ENCODE measurements at regions of chr5 and their contacts with region 1.

Region 1: DNA sequence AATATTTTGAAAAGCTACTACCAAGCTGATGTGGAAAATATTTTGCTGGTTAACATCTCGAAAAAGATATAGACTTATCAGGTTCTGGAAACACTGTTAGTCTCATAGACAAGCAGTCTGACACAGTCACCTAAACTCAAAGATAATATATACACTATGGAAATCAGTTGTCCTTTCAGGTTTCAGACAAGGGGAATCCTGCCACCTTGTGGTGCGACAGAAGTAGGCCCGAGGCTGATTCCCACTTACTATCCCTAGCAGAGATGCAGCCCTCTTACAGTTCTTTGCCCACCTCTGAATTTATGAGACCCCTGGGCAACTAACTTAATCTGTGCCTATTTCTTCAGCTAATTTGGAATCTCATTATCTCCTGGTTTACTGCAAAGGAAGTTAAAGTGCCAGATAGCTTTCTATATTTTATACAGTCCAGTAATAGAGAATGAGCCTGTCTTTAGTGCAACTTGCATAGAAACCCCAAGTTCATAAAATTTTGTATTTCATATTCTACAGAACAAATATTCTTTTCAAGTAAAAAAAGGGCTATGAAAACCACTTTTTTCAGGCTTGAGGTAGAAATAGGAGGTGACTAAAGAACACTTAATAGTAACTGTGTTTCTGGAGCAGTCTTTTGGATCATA is 16.9 kb downstream of the RAD1 start:
- DNase-seq: peak; percentile 65 to 82 (median 78)
- H3K4me3 ChIP-seq: no peak overlapping the region
- H3K27ac ChIP-seq: no peak overlapping the region
- H3K4me1 ChIP-seq: peaks cover 0 to 3% (median 0%) of the 10 kb centered on the region in 4 experiments
- H3K27me3 ChIP-seq: no peaks in the 10 kb centered on the region

Region 2: DNA sequence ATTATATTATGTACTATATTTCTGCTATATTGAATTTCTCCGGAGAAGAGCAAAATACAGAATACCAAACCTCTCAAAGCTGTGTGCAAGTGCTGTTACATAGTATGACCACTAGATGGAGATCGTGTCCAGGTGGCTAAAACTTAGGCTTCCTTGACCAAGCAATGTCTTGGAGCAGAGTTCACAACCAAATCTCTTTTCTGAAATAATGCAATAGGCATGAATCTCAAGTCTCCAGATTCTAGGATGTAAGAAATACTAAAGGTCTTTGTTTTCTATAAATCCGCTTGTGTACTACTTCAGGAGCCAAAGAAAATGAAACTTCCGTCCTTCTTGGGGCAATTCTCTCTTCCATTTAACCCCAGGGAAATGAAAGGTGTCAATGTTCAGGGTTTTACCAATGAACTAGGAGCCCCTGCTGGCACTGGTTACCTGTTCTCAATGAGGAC is 423.8 kb before region 1 on chr5:
- CTCF ChIA-PET with region 1: interaction called, 14 read pairs
- POLR2A ChIA-PET with region 1: no interaction called
- DNase-seq: peak; percentile 34 to 59 (median 45)
- H3K4me3 ChIP-seq: no peak overlapping the region
- H3K27ac ChIP-seq: no peak overlapping the region
- H3K4me1 ChIP-seq: peaks cover 0 to 6% (median 1%) of the 10 kb centered on the region in 4 experiments
- H3K27me3 ChIP-seq: peaks cover 0 to 2% (median 0%) of the 10 kb centered on the region in 5 experiments

Region 3: GRCh38 chr5:34480810-34481528 is 417.4 kb before region 1 on chr5:
- CTCF ChIA-PET with region 1: interaction called, 23 read pairs
- POLR2A ChIA-PET with region 1: no interaction called
- DNase-seq: no peak
- H3K4me3 ChIP-seq: no peak overlapping the region
- H3K27ac ChIP-seq: no peak overlapping the region
- H3K4me1 ChIP-seq: peaks cover 0 to 3% (median under 1%) of the 10 kb centered on the region in 4 experiments
- H3K27me3 ChIP-seq: peaks cover 0 to 7% (median 0%) of the 10 kb centered on the region in 5 experiments

Region 4: GRCh38 chr5:34522599-34523386 is 375.6 kb before region 1 on chr5:
- CTCF ChIA-PET with region 1: interaction called, 70 read pairs
- POLR2A ChIA-PET with region 1: no interaction called
- DNase-seq: peak; percentile 66 to 80 (median 77)
- H3K4me3 ChIP-seq: no peak overlapping the region
- H3K27ac ChIP-seq: no peak overlapping the region
- H3K4me1 ChIP-seq: peaks cover 0 to 7% (median 3%) of the 10 kb centered on the region in 4 experiments
- H3K27me3 ChIP-seq: no peaks in the 10 kb centered on the region

Region 5: DNA sequence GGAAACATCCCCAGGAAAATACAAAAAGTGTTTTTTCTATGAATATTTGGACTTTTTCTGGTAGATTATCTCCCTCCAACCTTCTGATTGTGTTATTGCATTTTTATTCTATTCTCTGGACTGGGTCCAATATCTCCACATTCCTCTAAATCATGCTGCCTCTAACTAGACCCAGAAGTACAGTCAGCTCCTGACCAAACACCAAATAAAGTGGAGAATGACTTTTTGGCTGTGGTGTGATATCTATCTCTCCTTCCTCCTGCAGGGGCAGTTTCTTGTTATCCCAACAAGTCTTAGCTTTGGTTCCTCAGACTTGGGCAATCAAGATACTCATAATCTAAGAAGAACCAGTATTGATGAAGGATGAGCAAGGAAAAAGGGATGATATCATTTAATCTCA is 245.5 kb before region 1 on chr5:
- CTCF ChIA-PET with region 1: no interaction called
- POLR2A ChIA-PET with region 1: no interaction called
- DNase-seq: no peak
- H3K4me3 ChIP-seq: no peak overlapping the region
- H3K27ac ChIP-seq: no peak overlapping the region
- H3K4me1 ChIP-seq: peaks cover 3 to 32% (median 22%) of the 10 kb centered on the region in 4 experiments
- H3K27me3 ChIP-seq: peaks cover 0 to 10% (median 7%) of the 10 kb centered on the region in 5 experiments

Region 6: GRCh38 chr5:34886392-34887119 is 11.8 kb before region 1 on chr5:
- CTCF ChIA-PET with region 1: interaction called, 13 read pairs
- POLR2A ChIA-PET with region 1: no interaction called
- DNase-seq: no peak
- H3K4me3 ChIP-seq: no peak overlapping the region
- H3K27ac ChIP-seq: no peak overlapping the region
- H3K4me1 ChIP-seq: no peaks in the 10 kb centered on the region
- H3K27me3 ChIP-seq: no peaks in the 10 kb centered on the region